RWPE1 (cell line): ENCODE measurements at regions of chr20 and their contacts with region 1.

Region 1: GRCh38 chr20:48620519-48621254 is 207.1 kb downstream of the PREX1 start:
- DNase-seq: peak; percentile 98
- H3K27ac ChIP-seq: peak overlapping the region; percentile 91
- CTCF ChIP-seq: peak; percentile 98

Region 2: DNA sequence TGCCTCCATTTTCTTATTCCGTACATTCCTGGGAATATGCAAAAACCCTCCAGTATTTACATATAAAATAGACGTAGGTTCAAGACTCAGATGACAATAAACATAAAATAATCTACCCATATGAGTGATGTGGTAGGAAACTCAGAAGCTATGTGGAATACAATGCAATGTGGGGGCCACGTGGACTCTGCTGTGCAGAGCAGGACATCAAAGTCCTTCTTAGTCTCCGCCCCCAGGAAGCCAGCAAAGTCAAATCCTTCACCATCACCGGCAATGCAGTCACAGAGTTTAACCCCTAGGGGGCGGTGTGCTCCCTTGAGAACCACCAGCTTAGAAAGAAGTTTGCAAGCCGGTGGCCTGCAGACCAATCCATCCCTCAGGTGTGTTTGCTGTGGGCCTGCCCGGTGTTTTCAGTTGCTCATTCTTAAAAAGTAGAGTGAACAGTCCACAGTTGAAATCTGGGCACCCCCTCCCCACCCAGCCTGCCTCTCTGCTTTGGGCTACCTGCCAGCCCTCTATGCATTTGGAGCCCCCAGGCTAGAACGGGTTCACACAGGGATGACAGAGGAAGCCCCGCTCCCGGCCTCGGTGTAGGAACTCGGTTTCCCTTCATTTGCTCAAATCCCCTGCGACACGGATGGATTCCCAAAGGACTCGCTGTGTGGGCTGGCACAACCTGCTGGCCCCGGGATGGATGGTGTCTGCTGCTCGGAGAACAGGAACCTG is 895.3 kb before region 1 on chr20:
- CTCF ChIA-PET with region 1: interaction called, 26 read pairs
- POLR2A ChIA-PET with region 1: no interaction called
- DNase-seq: peak; percentile 91
- H3K27ac ChIP-seq: peak overlapping the region; percentile 69
- CTCF ChIP-seq: peak; percentile 99

Region 3: GRCh38 chr20:48295445-48295963 is 325.2 kb before region 1 on chr20:
- CTCF ChIA-PET with region 1: interaction called, 40 read pairs
- POLR2A ChIA-PET with region 1: no interaction called
- DNase-seq: peak; percentile 97
- H3K27ac ChIP-seq: peak overlapping the region; percentile 78
- CTCF ChIP-seq: peak; percentile 87

Region 4: DNA sequence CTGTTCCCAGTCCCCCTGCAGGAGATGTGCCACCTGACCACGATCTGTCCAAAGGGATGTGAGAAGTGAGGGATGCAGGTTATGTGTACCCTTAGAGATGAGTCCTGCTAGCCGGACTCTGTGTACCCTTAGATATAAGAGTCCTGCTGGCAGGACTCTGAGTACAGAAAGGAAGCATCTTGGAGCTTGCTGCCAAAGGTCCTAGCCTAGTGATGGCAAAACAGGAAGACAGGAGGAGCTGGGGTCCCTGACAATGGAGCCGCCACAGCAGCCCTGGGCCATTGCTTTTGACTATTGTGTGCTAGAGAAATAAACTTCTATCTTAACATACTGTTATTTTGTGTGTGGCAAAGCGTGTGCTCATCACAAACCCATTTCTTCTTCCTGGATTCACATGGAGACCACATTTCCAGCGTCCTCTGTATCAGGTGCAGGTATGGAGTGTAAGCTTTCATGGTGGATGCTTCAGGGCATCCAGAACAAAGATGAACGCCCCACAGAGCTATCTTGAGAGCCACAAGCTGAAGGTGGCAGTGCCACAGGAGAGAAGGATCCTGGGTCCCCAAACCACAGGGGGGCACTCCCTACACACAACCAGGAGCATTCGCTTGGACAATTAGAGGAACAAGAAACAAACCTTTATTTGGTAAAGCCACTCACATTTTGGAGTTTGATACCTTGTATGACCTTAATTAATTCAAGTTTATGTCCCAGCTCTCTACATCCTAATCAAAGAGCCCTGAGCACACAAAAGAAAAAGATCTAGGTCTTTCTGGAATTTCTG is 199.3 kb before region 1 on chr20:
- CTCF ChIA-PET with region 1: interaction called, 45 read pairs
- POLR2A ChIA-PET with region 1: no interaction called
- DNase-seq: peak; percentile 27
- H3K27ac ChIP-seq: no peak overlapping the region
- CTCF ChIP-seq: no peak; the same call in 1 of the 2 replicates

Region 5: GRCh38 chr20:48471759-48472533 is 148.7 kb before region 1 on chr20:
- CTCF ChIA-PET with region 1: interaction called, 19 read pairs
- POLR2A ChIA-PET with region 1: no interaction called
- DNase-seq: no peak
- H3K27ac ChIP-seq: no peak overlapping the region
- CTCF ChIP-seq: no peak

Region 6: GRCh38 chr20:48592107-48592940 is 28.4 kb before region 1 on chr20:
- CTCF ChIA-PET with region 1: interaction called, 23 read pairs
- POLR2A ChIA-PET with region 1: no interaction called
- DNase-seq: no peak
- H3K27ac ChIP-seq: no peak overlapping the region
- CTCF ChIP-seq: no peak

Region 7: GRCh38 chr20:49046087-49046900 is 425.6 kb after region 1 on chr20 and contains the start of gene CSE1L:
- CTCF ChIA-PET with region 1: no interaction called
- POLR2A ChIA-PET with region 1: no interaction called
- DNase-seq: peak; percentile 99
- H3K27ac ChIP-seq: peak within 1 kb of the TSS; percentile 91
- CTCF ChIP-seq: no peak